RWPE1 (cell line): ENCODE measurements at regions of chr5 and their contacts with region 1.

Region 1: DNA sequence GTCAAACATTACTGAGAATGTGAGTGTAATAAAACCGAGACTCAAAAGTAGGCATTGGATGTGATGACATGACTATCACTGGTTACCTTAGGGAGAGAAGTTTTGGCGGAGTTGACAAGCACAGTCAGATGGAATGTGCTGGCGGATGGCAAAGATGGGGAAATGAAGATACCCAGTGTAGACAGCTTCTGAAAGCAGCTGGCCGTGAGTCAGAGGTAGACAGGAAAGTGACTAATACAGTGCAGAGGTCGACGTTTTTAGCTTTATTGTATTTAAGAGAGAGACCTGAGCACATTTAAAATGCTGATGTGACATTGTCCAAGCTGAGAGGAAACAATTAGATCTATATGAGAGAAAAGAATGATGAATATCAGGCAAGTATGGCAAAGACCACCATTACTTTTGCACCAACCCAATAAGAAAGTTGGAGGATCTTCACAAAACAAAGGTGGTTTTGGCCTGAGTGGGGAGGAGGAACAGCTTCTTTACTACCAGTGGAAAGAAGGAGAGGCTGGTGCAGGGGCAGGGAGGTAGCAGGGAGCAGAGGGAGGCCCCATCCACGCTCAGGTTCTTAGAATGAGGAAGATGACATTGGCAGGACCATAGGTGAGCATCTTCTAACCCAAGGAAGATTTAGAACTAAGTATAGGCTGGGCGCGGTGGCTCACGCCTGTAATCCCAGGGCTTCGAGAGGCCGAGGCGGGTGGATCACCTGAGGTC is 36.7 kb upstream of the KCNIP1 start:
- DNase-seq: peak; percentile 92
- H3K27ac ChIP-seq: peak overlapping the region; percentile 78
- CTCF ChIP-seq: no peak

Region 2: DNA sequence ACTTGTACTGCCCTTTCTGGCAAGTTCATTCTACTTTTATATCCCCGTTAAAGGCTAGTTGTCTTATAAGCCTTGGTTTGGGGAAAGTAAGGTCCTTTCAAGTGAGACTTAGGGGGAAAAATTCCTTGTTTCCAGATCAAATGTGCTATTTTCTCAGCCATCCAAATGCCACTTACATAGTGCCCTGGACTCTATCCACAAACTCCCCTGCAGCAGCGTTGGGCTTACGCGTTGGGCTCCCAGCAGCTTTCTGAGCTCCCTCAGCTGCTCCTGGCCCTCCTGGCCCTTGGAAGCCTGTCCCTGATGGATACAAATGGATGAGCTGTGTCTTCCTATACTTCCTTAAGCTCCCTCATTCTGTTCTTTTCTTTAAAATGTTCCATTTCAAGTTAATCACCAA is 1608.8 kb before region 1 on chr5:
- CTCF ChIA-PET with region 1: no interaction called
- POLR2A ChIA-PET with region 1: interaction called, 18 read pairs
- DNase-seq: no peak
- H3K27ac ChIP-seq: no peak overlapping the region
- CTCF ChIP-seq: no peak

Region 3: DNA sequence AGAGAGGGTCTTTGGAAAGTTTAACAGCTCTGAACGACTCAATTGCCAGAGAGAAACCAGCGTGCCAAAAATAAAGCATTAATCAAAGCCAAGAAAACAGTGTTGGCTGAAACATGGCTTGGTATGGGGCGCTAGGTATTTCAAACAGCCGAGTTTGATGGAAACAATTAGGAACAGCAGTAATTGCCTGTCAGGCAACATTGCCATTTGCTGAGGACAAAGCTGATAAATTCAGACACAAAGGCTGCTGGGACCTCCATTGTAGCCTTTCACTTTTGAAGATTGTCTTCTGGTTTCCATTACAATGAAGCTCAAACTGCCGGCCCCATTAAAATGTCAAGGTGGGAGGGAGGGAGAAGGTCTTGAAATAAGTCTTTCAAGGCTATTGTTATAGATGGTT is 1008.9 kb before region 1 on chr5:
- CTCF ChIA-PET with region 1: no interaction called
- POLR2A ChIA-PET with region 1: no interaction called
- DNase-seq: no peak
- H3K27ac ChIP-seq: no peak overlapping the region
- CTCF ChIP-seq: no peak